ENCODE measurements at regions of chr17 and their contacts with region 1.

Region 1: DNA sequence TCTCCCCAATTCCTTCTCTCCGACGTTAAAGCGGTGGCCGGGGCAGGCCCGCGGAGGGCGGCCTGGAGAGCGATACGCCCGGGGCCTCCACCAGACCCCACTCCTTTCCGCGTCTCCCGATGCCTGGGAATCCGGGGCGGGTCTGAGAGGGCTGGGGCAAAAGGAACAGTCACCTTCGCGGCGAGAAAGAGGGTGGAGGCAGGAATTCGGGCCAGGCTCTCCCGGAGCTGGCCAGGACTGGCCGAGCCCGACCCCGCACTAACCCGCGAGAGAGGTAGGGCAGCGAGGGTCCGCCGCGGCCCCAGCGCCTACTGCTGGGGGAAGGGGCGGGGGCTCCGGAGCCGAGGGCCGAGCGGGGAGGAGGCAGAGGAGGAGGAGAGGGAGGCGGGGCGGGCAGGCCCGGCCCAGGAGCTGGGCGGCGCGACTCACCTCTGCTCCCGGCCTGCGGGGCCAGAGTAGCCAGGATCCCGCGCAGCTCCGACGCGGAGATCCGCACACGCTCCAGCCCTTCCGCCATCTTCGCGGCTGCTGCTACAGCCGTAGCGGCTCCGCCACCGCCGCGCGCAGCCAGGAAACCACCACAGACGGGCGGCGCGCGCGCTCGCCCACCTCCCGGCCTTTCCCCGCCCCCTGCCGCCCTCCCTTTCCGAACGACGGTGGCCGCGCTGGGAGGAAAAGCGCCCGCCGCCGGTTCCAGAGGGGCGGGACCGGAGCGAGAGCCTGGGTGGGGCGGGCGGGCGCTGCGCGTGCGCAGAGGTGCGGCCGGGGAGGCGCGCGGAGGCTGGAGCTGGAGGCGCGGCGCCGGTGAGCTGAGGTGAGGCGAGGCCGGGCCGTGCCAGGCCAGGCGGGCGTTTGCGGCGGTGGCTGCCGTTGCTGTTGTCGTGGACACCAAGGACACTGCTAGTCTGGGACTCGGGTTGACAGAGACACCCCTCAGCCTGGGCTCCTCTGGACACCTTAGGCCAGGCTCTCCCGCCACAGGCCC is at the starts of genes SMG6 and SRR:
- DNase-seq: peak; percentile 90 to 92
- H3K4me3 ChIP-seq: peak within 1 kb of the TSS; percentile 73
- H3K4me3 Mint-ChIP-seq: peak within 1 kb of the TSS; percentile 80
- H3K27ac Mint-ChIP-seq: peak within 1 kb of the TSS; percentile 72
- H3K4me1 ChIP-seq: no peaks in the 10 kb centered on the region
- H3K4me1 Mint-ChIP-seq: peaks cover 13% of the 10 kb centered on the region
- H3K27me3 ChIP-seq: no peaks in the 10 kb centered on the region
- H3K27me3 Mint-ChIP-seq: no peaks in the 10 kb centered on the region
- CTCF ChIP-seq: no peak
- total RNA-seq, gene SMG6: 33.8 and 35.3 TPM in 2 replicates
- total RNA-seq, gene SRR: 15.2 and 18.2 TPM in 2 replicates

Region 2: GRCh38 chr17:1755252-1755826 is 548.2 kb before region 1 on chr17:
- CTCF ChIA-PET with region 1: interaction called, 11 read pairs
- POLR2A ChIA-PET with region 1: no interaction called
- intact Hi-C with region 1: no loop called
- DNase-seq: no peak
- H3K4me3 ChIP-seq: no peak overlapping the region
- H3K4me3 Mint-ChIP-seq: no peak overlapping the region
- H3K27ac Mint-ChIP-seq: no peak overlapping the region
- H3K4me1 ChIP-seq: no peaks in the 10 kb centered on the region; the same call in 1 of the 2 replicates
- H3K4me1 Mint-ChIP-seq: no peaks in the 10 kb centered on the region
- H3K27me3 ChIP-seq: no peaks in the 10 kb centered on the region
- H3K27me3 Mint-ChIP-seq: no peaks in the 10 kb centered on the region
- CTCF ChIP-seq: no peak

Region 3: GRCh38 chr17:2336215-2336851 is 32.8 kb after region 1 on chr17 and contains the start of gene TSR1:
- CTCF ChIA-PET with region 1: interaction called, 10 read pairs
- POLR2A ChIA-PET with region 1: interaction called, 28 read pairs
- intact Hi-C with region 1: loop called (anchors 1 kb)
- DNase-seq: peak; percentile 93 to 95
- H3K4me3 ChIP-seq: peak within 1 kb of the TSS; percentile 72
- H3K4me3 Mint-ChIP-seq: peak within 1 kb of the TSS; percentile 99
- H3K27ac Mint-ChIP-seq: peak within 1 kb of the TSS; percentile 95
- H3K4me1 ChIP-seq: peaks cover 13% of the 10 kb centered on the region; the same call in 1 of the 2 replicates
- H3K4me1 Mint-ChIP-seq: peaks cover 6% of the 10 kb centered on the region
- H3K27me3 ChIP-seq: no peaks in the 10 kb centered on the region
- H3K27me3 Mint-ChIP-seq: no peaks in the 10 kb centered on the region
- CTCF ChIP-seq: peak in 1 of 2 experiments; percentile 46
- total RNA-seq, gene TSR1: 65.4 and 67.3 TPM in 2 replicates